ENCODE measurements at regions of chr5 and their contacts with region 1.

Region 1: DNA sequence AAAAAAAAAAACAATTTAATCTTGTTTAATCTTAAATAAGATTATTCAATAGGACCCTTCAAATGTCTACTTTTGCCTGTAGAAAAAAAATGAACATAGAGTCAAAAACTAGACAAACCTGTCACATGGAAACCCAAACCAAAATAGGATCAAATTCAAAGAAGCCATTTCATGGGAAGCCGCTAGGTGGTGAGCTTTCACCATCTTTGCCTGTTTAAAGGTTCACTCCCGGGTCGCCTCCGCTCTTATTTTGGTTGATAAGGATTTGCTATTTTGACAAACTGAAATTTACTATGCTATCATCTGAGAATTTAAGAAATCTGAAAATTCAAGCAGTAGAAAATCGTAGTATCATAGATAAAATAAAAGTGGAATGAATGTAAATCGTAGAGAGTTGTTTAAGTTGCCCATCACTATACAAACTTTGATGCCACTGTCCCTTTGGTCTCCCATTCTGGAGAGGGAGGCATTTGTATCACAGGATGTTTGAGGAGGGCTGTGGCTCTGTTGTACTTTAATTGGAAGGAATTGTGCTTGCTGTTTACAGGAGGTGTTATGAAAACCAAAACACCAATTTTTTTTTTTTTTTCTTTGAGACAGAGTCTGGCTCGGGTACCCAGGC is 43.5 kb upstream of the DNAH5 start:
- DNase-seq: peak in 1 of 2 donors; percentile 38
- ATAC-seq: peak in 7 of 8 donors; percentile 20 to 79 (median 71)
- H3K4me3 ChIP-seq: no peak overlapping the region
- H3K27ac ChIP-seq: no peak overlapping the region
- H3K4me1 ChIP-seq: peaks cover 0 to 3% (median 0%) of the 10 kb centered on the region in 9 donors
- H3K27me3 ChIP-seq: peaks cover 0 to 13% (median 3%) of the 10 kb centered on the region in 7 donors
- CTCF ChIP-seq: peak; percentile 61 to 92 (median 82)

Region 2: DNA sequence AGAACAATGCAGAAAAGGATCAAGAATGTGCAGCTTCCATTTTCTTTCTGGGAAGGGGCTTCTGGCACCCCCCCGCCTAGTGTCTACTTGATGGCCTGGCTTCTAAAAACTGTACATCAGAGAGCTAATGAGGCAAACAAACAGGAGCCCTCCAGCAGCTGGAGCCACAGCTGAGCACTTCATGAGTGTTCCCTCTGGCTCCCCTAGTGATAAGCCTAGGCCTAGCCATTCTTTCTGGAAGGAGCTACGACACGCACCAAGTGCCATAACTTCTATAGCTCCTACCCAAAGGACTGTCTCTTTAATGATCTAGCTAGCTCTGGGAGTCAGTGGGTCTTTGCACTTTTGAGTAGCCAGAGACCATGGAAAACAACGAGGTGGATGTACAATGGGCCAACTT is 109.6 kb before region 1 on chr5:
- intact Hi-C with region 1: no loop called
- DNase-seq: no peak
- ATAC-seq: no peak
- H3K4me3 ChIP-seq: no peak overlapping the region
- H3K27ac ChIP-seq: no peak overlapping the region
- H3K4me1 ChIP-seq: no peaks in the 10 kb centered on the region
- H3K27me3 ChIP-seq: no peaks in the 10 kb centered on the region
- CTCF ChIP-seq: no peak

Region 3: DNA sequence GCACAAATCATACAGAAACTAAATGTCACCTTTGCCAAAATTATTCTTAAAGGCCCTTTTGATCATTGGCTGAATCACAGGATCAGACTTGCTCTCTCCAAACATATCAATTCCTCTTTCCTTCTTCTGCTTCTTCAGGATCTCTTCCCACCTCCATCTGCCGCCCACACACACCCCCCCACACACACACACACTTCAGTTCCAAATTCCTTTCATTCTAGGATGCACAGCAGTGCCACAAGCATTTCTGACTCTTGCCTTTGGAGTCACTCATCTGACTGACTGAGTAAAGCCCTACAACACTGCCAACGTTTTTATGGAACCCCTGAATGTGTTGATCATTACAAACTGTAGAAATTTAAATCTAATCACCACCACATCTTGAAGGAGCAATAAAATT is 66.4 kb before region 1 on chr5:
- intact Hi-C with region 1: no loop called
- DNase-seq: no peak
- ATAC-seq: no peak
- H3K4me3 ChIP-seq: no peak overlapping the region
- H3K27ac ChIP-seq: no peak overlapping the region
- H3K4me1 ChIP-seq: no peaks in the 10 kb centered on the region
- H3K27me3 ChIP-seq: no peaks in the 10 kb centered on the region
- CTCF ChIP-seq: no peak

Region 4: GRCh38 chr5:14264604-14265316 is 276.8 kb after region 1 on chr5:
- intact Hi-C with region 1: loop called in 1 of 10 experiments (anchors 5 kb)
- DNase-seq: peak; percentile 88 to 92
- ATAC-seq: peak; percentile 85 to 97 (median 94)
- H3K4me3 ChIP-seq: peak overlapping the region in 7 of 10 donors; percentile 24 to 47 (median 30)
- H3K27ac ChIP-seq: peak overlapping the region in 3 of 10 donors; percentile 1 to 25 (median 10)
- H3K4me1 ChIP-seq: peaks cover 14 to 82% (median 60%) of the 10 kb centered on the region in 9 donors
- H3K27me3 ChIP-seq: no peaks in the 10 kb centered on the region
- CTCF ChIP-seq: no peak

Region 5: GRCh38 chr5:14270209-14270702 is 282.3 kb after region 1 on chr5:
- intact Hi-C with region 1: loop called in 7 of 10 experiments (anchors 5 to 10 kb)
- DNase-seq: peak in 1 of 2 donors; percentile 79
- ATAC-seq: peak; percentile 90 to 96 (median 95)
- H3K4me3 ChIP-seq: no peak overlapping the region
- H3K27ac ChIP-seq: peak overlapping the region in 9 of 10 donors; percentile 38 to 84 (median 68)
- H3K4me1 ChIP-seq: peaks cover 18 to 71% (median 51%) of the 10 kb centered on the region in 9 donors
- H3K27me3 ChIP-seq: no peaks in the 10 kb centered on the region
- CTCF ChIP-seq: peak; percentile 64 to 92 (median 83)

Region 6: DNA sequence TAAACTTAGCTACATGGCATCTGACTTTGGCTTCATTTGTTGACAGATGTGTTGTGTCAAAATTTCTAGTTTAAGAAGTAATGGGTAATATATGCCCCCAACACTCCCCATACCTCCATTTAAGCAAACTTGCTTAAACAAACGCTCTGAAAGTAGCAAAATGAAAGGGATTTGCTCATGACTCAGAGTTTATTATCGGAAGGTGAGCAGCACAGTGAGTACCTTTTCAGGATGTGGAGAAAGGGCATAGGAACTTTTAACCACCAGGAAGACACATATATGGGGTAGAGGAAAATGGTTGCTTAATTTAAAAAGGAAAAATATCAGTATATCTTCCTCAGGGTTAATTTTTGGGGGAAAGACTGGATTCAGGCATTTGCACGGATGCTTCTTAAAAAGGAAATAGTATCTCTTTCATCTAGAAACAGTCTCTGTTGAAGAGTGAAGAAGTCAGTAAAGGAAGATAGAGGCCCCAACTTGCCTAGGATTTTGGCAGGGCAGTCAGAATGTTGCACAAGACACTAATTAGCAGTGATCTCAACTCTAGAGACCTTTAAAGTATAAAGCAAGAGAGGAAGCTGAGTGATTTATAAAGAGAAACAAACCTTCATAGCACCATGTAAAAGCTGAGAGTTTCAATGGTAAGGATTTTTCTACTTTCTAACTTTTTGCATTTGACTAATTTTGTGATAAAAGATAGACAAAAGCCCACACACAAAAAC is 310.3 kb after region 1 on chr5:
- intact Hi-C with region 1: loop called in 1 of 10 experiments (anchors 10 kb)
- DNase-seq: no peak
- ATAC-seq: peak in 4 of 8 donors; percentile 43 to 60 (median 48)
- H3K4me3 ChIP-seq: no peak overlapping the region
- H3K27ac ChIP-seq: peak overlapping the region in 8 of 10 donors; percentile 11 to 77 (median 54)
- H3K4me1 ChIP-seq: peaks cover 2 to 59% (median 46%) of the 10 kb centered on the region in 9 donors
- H3K27me3 ChIP-seq: no peaks in the 10 kb centered on the region
- CTCF ChIP-seq: no peak

Region 7: GRCh38 chr5:14351845-14352712 is 364.1 kb after region 1 on chr5:
- intact Hi-C with region 1: loop called in 6 of 10 experiments (anchors 5 to 10 kb)
- DNase-seq: peak; percentile 59 to 64
- ATAC-seq: peak; percentile 80 to 93 (median 87)
- H3K4me3 ChIP-seq: no peak overlapping the region
- H3K27ac ChIP-seq: no peak overlapping the region
- H3K4me1 ChIP-seq: peaks cover 7 to 45% (median 10%) of the 10 kb centered on the region in 9 donors
- H3K27me3 ChIP-seq: no peaks in the 10 kb centered on the region
- CTCF ChIP-seq: peak; percentile 88 to 98 (median 96)

Region 8: DNA sequence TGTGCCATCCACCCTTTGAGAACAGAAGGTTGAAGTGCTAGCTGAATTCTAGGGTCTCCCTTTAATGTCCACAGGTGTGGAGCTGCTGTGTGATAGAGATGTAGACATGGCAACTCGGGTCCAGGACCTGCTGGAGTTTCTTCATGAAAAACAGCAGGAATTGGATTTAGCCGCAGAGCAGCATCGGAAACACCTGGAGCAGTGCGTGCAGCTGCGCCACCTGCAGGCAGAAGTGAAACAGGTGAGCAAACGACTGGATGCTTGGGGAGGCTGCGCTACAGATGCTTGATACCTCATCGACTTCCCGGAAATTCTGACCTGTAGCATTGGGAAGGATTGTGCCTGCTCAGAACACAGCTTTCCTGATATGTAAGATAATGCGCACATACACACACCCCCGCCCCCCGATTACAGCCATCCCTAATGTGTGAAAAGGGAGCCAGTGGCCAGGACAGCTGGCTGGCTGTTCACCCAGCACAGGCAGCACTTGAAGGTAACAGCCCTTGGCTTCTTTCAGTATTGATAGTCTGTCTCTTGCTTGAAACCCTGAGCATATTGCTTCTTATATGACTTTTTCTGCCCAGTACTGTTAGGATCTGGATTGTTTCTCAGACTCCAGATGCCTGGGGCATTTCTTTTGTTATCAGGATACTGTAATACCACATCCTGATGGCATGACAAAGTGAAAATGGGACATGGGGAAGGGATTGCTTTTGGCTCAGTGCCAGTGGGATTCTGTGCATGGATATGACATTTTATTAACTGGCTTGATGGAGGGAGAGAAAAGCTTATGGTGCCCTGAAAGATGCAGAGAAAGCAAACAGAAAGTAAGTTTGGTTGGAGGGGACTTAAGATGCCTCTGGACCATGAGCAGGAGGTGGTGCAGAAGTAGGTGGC is 376.9 kb after region 1 on chr5:
- intact Hi-C with region 1: loop called in 1 of 10 experiments (anchors 5 kb)
- DNase-seq: no peak
- ATAC-seq: no peak
- H3K4me3 ChIP-seq: no peak overlapping the region
- H3K27ac ChIP-seq: no peak overlapping the region
- H3K4me1 ChIP-seq: peaks cover 0 to 16% (median 9%) of the 10 kb centered on the region in 9 donors
- H3K27me3 ChIP-seq: no peaks in the 10 kb centered on the region
- CTCF ChIP-seq: peak in 8 of 9 donors; percentile 29 to 62 (median 47)

Measured in heart right ventricle (tissue), 16 donors.